ENCODE measurements at regions of chr3 and their contacts with region 1.

Region 1: GRCh38 chr3:133927540-133928066 is 31.9 kb upstream of the RAB6B start:
- DNase-seq: peak; percentile 70 to 94 (median 90)
- ATAC-seq: peak; percentile 92
- H3K4me3 ChIP-seq: peak overlapping the region; percentile 40
- H3K27ac ChIP-seq: no peak overlapping the region
- H3K4me1 ChIP-seq: peaks cover 0 to 16% of the 10 kb centered on the region in 2 experiments; a peak in 3 of 5 replicates
- H3K27me3 ChIP-seq: peaks cover 3 to 25% of the 10 kb centered on the region in 2 experiments; a peak in 4 of 5 replicates
- CTCF ChIP-seq: peak; percentile 61 to 78 (median 67)
- EP300 ChIP-seq: no peak
- POLR2A ChIP-seq: no peak
- RAD21 ChIP-seq: peak; percentile 51 to 77

Region 2: GRCh38 chr3:133821767-133822638 is 105.6 kb before region 1 on chr3:
- CTCF ChIA-PET with region 1: interaction called, 24 read pairs
- POLR2A ChIA-PET with region 1: no interaction called
- in situ Hi-C with region 1: loop called (anchors 5 kb)
- intact Hi-C with region 1: loop called (anchors 1 kb)
- DNase-seq: peak; percentile 24 to 59 (median 30)
- ATAC-seq: peak; percentile 83
- H3K4me3 ChIP-seq: no peak overlapping the region
- H3K27ac ChIP-seq: no peak overlapping the region
- H3K4me1 ChIP-seq: peaks cover 0 to 4% of the 10 kb centered on the region in 2 experiments; a peak in 3 of 5 replicates
- H3K27me3 ChIP-seq: no peaks in the 10 kb centered on the region
- CTCF ChIP-seq: peak; percentile 38 to 57 (median 57); a peak in 5 of 6 replicates
- EP300 ChIP-seq: no peak
- POLR2A ChIP-seq: 0 out of 2 replicates have a peak, but pooled peaks have one; percentile 31
- RAD21 ChIP-seq: peak in 1 of 2 experiments; percentile 52; a peak in 2 of 4 replicates

Region 3: GRCh38 chr3:134039161-134039862 is 111.7 kb after region 1 on chr3:
- CTCF ChIA-PET with region 1: interaction called, 5 read pairs
- POLR2A ChIA-PET with region 1: no interaction called
- in situ Hi-C with region 1: no loop called
- intact Hi-C with region 1: loop called (anchors 1 kb)
- DNase-seq: peak; percentile 18 to 41 (median 23)
- ATAC-seq: peak; percentile 97
- H3K4me3 ChIP-seq: no peak overlapping the region
- H3K27ac ChIP-seq: no peak overlapping the region
- H3K4me1 ChIP-seq: no peaks in the 10 kb centered on the region
- H3K27me3 ChIP-seq: peaks cover 0 to 10% of the 10 kb centered on the region in 2 experiments; a peak in 2 of 5 replicates
- CTCF ChIP-seq: peak; percentile 44 to 51 (median 50); a peak in 5 of 6 replicates
- EP300 ChIP-seq: no peak
- POLR2A ChIP-seq: no peak
- RAD21 ChIP-seq: peak in 1 of 2 experiments; percentile 61; a peak in 2 of 4 replicates

Region 4: DNA sequence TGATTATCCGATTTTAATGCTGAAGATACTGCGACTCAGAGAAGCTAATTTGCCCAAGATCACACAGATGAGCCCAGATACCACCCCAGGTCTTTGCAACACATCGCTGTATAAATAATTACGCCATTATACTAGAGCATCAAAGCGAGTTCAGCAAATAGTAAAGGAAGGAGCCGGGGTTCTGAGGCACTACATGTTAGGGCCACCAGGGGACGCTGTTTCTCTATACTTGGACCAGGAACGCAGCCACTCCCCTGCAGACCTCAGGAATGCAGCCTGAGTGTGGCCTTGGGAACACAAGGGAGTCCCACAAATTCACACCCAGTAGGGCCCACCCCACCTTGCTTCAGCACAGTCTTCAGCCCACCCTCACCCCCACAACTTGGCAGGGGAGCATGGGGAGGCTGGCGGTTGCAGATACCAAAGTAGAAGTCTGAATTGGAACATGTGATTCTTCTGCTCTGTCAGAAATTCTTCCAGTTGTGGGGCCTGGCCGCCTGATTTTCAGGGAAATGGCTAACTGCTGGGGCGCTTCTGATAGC is 380.8 kb after region 1 on chr3:
- CTCF ChIA-PET with region 1: no interaction called
- POLR2A ChIA-PET with region 1: no interaction called
- in situ Hi-C with region 1: no loop called
- intact Hi-C with region 1: loop called (anchors 10 kb)
- DNase-seq: peak; percentile 62 to 71 (median 68)
- ATAC-seq: peak; percentile 91
- H3K4me3 ChIP-seq: no peak overlapping the region
- H3K27ac ChIP-seq: no peak overlapping the region
- H3K4me1 ChIP-seq: peaks cover 0 to 11% of the 10 kb centered on the region in 2 experiments; a peak in 2 of 5 replicates
- H3K27me3 ChIP-seq: peaks cover 2 to 35% of the 10 kb centered on the region in 2 experiments; a peak in 3 of 5 replicates
- CTCF ChIP-seq: peak; percentile 84 to 94 (median 92)
- EP300 ChIP-seq: no peak
- POLR2A ChIP-seq: no peak
- RAD21 ChIP-seq: peak; percentile 79 to 90